Activated CD8-positive, alpha-beta memory T cell treated with anti-CD3 and anti-CD28 coated beads, Interleukin-2, amount 10 ng/mL, durations not matched to agents 7 days and 5 days (primary cell): ENCODE measurements at regions of chr11 and their contacts with region 1.

Region 1: GRCh38 chr11:134253188-134253993 is at the starts of genes ACAD8 and THYN1:
- DNase-seq: peak; percentile 98
- ATAC-seq: peak; percentile 99
- H3K4me3 Mint-ChIP-seq: peak within 1 kb of the TSS; percentile 94
- H3K27ac Mint-ChIP-seq: peak within 1 kb of the TSS; percentile 85
- H3K4me1 Mint-ChIP-seq: peaks cover 43% of the 10 kb centered on the region
- H3K27me3 Mint-ChIP-seq: no peaks in the 10 kb centered on the region
- total RNA-seq, gene ACAD8: 29.4 to 31.6 TPM
- total RNA-seq, gene THYN1: 69.3 to 71.1 TPM

Region 2: GRCh38 chr11:134270250-134270714 is 16.9 kb after region 1 on chr11:
- CTCF ChIA-PET with region 1: interaction called, 26 read pairs
- DNase-seq: peak; percentile 69
- ATAC-seq: peak; percentile 64
- H3K4me3 Mint-ChIP-seq: peak overlapping the region; percentile 56
- H3K27ac Mint-ChIP-seq: peak overlapping the region; percentile 82
- H3K4me1 Mint-ChIP-seq: peaks cover 62% of the 10 kb centered on the region
- H3K27me3 Mint-ChIP-seq: no peaks in the 10 kb centered on the region

Region 3: DNA sequence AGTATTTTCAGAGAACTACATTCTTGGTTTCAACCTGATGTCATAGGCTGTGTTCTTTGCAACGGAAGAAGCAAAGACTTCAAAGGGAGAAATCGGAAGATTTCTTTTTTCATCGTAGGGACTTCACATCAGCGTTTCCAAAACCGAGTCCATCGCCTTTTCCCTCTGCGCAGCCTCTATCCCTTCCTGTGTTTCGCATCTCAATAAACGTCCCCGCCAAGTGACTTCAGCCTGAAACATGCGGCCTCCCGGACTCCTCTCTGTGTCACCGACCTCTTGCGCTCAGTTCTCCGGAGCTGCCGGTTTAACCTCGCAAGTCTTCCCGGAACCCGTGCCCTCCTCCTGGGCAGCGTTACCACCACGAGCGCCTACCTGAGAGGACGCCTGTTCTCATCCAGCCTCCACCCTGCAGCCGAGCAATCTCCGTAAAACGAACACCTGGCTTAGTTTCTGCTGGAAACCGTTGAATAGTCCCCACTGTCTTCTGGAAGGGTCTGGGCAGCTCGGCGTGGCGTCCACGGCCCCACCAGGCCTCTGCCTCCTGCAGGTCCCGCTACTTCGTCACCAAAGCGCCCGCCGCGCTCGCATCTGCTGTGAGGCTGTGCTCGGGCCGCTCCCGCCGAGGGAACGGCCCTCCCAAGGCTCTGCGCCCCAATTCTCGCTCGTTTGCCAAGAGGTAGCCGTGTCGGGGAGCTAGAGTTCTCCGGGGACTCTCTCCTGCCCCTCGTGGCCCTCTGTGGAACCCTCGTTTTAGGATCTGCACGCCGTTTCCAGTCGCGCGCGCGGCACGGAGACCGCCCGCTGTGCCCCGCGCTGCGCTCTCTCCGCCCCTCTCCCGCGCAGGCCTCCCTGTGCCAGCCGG is 22.4 kb after region 1 on chr11 and contains the start of gene GLB1L3:
- CTCF ChIA-PET with region 1: interaction called, 26 read pairs
- DNase-seq: peak; percentile 90
- ATAC-seq: peak; percentile 93
- H3K4me3 Mint-ChIP-seq: peak within 1 kb of the TSS; percentile 96
- H3K27ac Mint-ChIP-seq: peak within 1 kb of the TSS; percentile 93
- H3K4me1 Mint-ChIP-seq: peaks cover 49% of the 10 kb centered on the region
- H3K27me3 Mint-ChIP-seq: peaks cover 4% of the 10 kb centered on the region
- total RNA-seq, gene GLB1L3: 4.1 to 6.1 TPM